ENCODE measurements at regions of chr15 and their contacts with region 1.

Region 1: DNA sequence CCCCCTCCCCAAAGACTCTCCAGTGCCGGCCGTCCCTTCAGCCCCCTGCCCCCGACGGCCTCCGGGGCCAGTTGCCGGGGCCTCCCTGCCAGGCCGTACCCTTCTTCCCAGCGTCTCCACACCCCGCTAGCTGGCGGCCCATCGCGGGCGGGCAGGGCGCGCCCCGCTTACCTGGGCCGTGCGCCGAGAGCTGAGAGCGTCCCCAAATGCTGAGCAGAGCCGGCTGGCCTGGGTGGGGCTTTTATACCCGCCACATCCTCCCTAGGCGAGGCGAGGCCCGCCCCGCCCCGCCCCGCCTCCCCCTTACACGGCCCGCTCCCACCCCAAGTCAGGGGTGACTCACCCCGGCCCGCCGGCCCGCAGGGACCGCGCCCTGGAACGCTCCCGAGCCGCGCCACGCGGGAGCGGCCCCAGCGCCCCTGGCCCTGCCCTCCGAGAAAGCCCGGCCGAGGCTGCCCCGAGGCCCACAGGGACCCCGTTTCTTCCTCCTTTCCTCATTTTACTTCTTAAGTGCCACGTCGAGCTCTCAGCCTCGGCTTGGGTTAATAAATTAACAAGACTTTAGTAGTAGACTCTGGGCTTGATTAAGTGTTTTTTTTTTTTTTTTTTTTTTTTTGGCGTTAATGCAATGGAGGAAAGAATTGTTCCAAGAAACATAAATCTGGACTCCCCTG is at the start of gene ANXA2:
- DNase-seq: peak; percentile 62 to 93
- H3K4me3 ChIP-seq: peak within 1 kb of the TSS; percentile 73 to 87
- H3K27ac ChIP-seq: peak within 1 kb of the TSS; percentile 98 to 99
- H3K4me1 ChIP-seq: peaks cover 14 to 44% of the 10 kb centered on the region in 2 donors
- H3K27me3 ChIP-seq: no peaks in the 10 kb centered on the region
- CTCF ChIP-seq: no peak
- total RNA-seq, gene ANXA2: 730 TPM

Region 2: GRCh38 chr15:59035201-59035600 is 1362.7 kb before region 1 on chr15:
- intact Hi-C with region 1: no loop called
- DNase-seq: no peak
- H3K4me3 ChIP-seq: no peak overlapping the region
- H3K27ac ChIP-seq: no peak overlapping the region
- H3K4me1 ChIP-seq: peaks cover 0 to 10% of the 10 kb centered on the region in 2 donors
- H3K27me3 ChIP-seq: no peaks in the 10 kb centered on the region
- CTCF ChIP-seq: no peak

Region 3: GRCh38 chr15:60255390-60255789 is 142.5 kb before region 1 on chr15:
- intact Hi-C with region 1: no loop called
- DNase-seq: no peak
- H3K4me3 ChIP-seq: no peak overlapping the region
- H3K27ac ChIP-seq: no peak overlapping the region
- H3K4me1 ChIP-seq: no peaks in the 10 kb centered on the region
- H3K27me3 ChIP-seq: no peaks in the 10 kb centered on the region
- CTCF ChIP-seq: no peak

Region 4: DNA sequence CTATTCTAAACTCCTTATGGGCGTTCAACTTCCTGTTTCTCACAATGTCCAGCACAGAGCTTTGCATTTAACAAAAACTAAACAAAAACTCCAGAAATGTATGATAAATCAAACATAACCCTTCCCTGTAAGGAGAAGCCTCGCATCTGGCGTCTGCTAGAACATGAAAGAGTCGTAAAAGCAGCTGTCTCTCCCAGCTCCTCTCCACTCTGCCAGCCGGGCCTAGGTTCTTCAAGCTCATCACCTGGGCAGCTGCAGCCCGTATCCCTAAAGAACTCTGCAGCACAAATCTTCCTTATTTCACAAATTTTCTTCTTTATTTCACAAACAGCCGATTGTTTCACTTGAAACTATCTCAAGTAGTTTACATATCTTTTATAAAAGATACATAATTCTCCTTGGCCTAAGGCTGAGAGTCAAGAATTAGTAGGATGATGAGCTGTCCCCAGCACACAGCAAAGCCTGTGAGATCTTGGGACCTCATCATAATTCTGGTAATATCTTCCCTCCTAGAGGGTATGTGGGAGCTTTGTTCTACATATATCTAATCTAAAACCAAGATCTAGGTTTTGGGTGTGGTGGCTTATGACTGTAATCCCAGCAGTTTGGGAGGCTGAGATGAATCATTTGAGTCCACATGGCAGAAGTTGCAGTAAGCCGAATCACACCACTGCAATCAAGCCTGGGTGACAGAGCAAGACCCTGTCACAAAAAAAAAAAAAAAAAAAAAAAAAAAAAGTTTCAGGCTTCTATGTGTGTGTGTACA is 35.4 kb before region 1 on chr15:
- intact Hi-C with region 1: loop called (anchors 2 kb)
- DNase-seq: peak in 1 of 2 donors; percentile 73
- H3K4me3 ChIP-seq: peak overlapping the region; percentile 2 to 11
- H3K27ac ChIP-seq: peak overlapping the region; percentile 72 to 82
- H3K4me1 ChIP-seq: peaks cover 11 to 53% of the 10 kb centered on the region in 2 donors
- H3K27me3 ChIP-seq: no peaks in the 10 kb centered on the region
- CTCF ChIP-seq: no peak

Region 5: DNA sequence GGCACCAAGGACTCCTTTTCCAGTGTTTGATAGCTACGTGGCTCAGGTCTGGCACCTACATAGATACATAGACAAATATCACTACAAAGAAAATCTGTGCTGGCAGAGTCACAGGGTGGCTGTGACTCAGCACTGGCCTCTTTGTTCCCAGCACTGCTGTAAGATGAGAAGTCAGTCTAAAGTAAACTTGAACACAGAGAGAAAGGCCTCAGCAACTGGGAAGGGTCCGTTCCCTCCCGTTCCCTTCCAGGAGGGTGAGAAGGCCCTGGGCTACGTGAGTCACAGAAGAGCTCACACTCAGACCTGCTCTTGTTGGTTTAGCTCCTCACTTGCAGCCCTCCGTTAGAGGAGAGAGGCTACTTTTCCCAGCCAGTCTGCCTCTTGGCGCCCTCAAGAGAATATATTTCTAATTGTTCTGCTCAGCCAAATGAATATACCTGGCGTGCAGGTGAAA is 23.3 kb before region 1 on chr15:
- intact Hi-C with region 1: loop called (anchors 1 kb)
- DNase-seq: peak; percentile 57 to 93
- H3K4me3 ChIP-seq: peak overlapping the region in 1 of 2 donors; percentile 40
- H3K27ac ChIP-seq: peak overlapping the region; percentile 90 to 96
- H3K4me1 ChIP-seq: peaks cover 46 to 85% of the 10 kb centered on the region in 2 donors
- H3K27me3 ChIP-seq: no peaks in the 10 kb centered on the region
- CTCF ChIP-seq: no peak

Region 6: DNA sequence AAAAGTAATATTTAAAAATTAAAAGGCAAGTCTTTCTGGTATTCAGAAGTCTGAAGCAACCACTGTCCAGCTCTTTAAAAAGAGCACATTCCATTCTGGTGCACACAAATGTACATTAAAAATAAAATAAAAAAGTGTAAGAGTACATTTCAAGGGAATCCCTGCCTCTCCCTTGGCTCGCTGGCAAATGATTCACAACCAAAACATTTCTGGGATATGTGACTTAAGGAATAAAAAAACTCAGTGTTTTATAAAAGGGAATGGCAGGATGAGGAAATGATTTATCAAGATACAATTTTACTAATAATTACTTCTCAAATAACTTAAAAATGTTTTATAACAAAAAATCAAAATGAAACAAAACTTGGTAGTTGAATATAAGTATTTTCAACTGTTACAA is 23.6 kb after region 1 on chr15:
- intact Hi-C with region 1: loop called (anchors 2 kb)
- DNase-seq: no peak
- H3K4me3 ChIP-seq: no peak overlapping the region
- H3K27ac ChIP-seq: peak overlapping the region in 1 of 2 donors; percentile 35
- H3K4me1 ChIP-seq: peaks cover 0 to 19% of the 10 kb centered on the region in 2 donors
- H3K27me3 ChIP-seq: no peaks in the 10 kb centered on the region
- CTCF ChIP-seq: no peak

Region 7: GRCh38 chr15:60426870-60427508 is 29.1 kb after region 1 on chr15:
- intact Hi-C with region 1: loop called (anchors 2 kb)
- DNase-seq: no peak
- H3K4me3 ChIP-seq: no peak overlapping the region
- H3K27ac ChIP-seq: peak overlapping the region; percentile 63 to 65
- H3K4me1 ChIP-seq: peaks cover 3 to 19% of the 10 kb centered on the region in 2 donors
- H3K27me3 ChIP-seq: no peaks in the 10 kb centered on the region
- CTCF ChIP-seq: no peak

Region 8: GRCh38 chr15:60478566-60479360 is 80.9 kb after region 1 on chr15 and contains the start of gene ICE2:
- intact Hi-C with region 1: loop called (anchors 5 kb)
- DNase-seq: peak; percentile 85 to 98
- H3K4me3 ChIP-seq: peak within 1 kb of the TSS; percentile 84 to 100
- H3K27ac ChIP-seq: peak within 1 kb of the TSS; percentile 95 to 98
- H3K4me1 ChIP-seq: peaks cover 0 to 22% of the 10 kb centered on the region in 2 donors
- H3K27me3 ChIP-seq: no peaks in the 10 kb centered on the region
- CTCF ChIP-seq: no peak
- total RNA-seq, gene ICE2: 45.1 TPM